Kidney (tissue), 22 donors: ENCODE measurements at regions of chr21 and their contacts with region 1.

Region 1: DNA sequence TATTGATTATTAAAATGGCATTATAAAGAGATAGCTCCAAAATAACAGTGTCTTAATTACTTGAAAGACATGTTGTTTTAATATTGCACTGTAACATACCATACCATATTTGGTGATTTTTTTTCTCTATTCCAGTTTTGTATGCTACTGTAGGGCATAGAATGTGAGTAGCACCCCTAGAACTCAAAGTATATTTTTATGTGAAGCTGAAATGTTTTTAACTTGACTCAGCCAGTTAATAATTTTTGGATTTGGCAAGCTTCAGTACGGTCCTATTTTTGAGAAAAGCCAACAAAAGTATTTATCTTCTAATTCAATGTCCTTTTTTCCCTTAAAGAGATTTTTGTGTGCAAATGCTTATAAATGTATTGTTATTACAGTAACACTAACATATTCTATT is 593.8 kb downstream of the USP25 start:
- DNase-seq: no peak
- H3K4me3 ChIP-seq: no peak overlapping the region
- H3K27ac ChIP-seq: no peak overlapping the region
- H3K4me1 ChIP-seq: peaks cover 0 to 4% (median 0%) of the 10 kb centered on the region in 3 donors
- H3K27me3 ChIP-seq: no peaks in the 10 kb centered on the region
- CTCF ChIP-seq: no peak

Region 2: DNA sequence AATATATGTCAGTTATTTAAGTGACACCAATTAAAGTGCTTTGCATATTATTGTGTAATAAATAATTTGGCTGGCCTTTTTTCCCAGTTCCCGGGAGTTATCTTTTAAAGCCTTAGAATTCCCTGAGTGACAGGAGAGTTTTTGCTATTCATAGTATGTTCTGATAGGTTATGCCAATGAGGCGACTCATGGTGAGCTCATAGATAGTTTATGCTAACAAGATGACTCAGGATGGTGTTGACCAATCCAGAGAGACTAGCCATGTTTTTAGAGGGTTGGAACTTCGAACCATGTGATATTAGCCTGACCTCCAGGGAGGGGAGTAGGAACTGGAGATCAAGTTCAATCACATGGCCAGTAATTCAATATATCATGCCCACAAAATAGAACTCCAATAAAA is 283.0 kb before region 1 on chr21:
- intact Hi-C with region 1: no loop called
- DNase-seq: no peak
- H3K4me3 ChIP-seq: no peak overlapping the region
- H3K27ac ChIP-seq: no peak overlapping the region
- H3K4me1 ChIP-seq: no peaks in the 10 kb centered on the region
- H3K27me3 ChIP-seq: no peaks in the 10 kb centered on the region
- CTCF ChIP-seq: no peak

Region 3: GRCh38 chr21:16082038-16082816 is 241.4 kb before region 1 on chr21:
- intact Hi-C with region 1: loop called (anchors 10 kb)
- DNase-seq: peak in 1 of 5 donors; percentile 55
- H3K4me3 ChIP-seq: peak overlapping the region in 2 of 3 donors; percentile 25 to 29
- H3K27ac ChIP-seq: no peak overlapping the region
- H3K4me1 ChIP-seq: no peaks in the 10 kb centered on the region
- H3K27me3 ChIP-seq: no peaks in the 10 kb centered on the region
- CTCF ChIP-seq: peak; percentile 17